ENCODE measurements at regions of chr10 and their contacts with region 1.

Region 1: DNA sequence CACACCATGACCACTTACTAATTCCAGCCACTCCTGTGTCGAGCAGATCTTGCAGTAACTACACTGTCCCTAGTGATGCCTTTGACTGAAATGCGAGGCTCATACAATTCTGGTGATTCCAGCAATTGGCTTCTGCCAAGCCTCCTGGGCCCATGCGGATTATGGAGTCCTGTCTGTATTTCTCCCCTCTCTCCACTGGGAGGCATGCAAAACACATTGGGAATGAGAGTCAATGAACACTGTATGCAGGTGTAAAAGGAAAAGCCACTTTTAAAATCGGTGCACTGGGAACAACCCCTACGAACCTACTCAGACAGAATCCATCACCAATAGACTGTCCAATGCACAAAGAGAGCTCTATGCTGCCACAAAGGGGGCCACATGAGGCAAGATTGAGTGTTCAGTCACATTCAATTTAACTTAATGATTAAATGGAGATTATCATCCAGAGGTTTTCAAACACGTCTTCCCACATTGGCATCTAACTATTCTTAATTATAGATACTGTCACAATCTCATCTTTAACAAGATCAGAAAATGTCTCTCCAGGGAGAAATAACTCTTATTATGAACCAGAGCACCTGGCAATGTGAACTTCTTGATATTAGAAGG is 550.6 kb downstream of the GLRX3 start:
- DNase-seq: peak in 1 of 2 experiments; percentile 13
- H3K4me3 ChIP-seq: no peak overlapping the region
- H3K27ac ChIP-seq: no peak overlapping the region
- H3K4me1 ChIP-seq: no peaks in the 10 kb centered on the region
- H3K27me3 ChIP-seq: no peaks in the 10 kb centered on the region
- CTCF ChIP-seq: peak; percentile 49 to 90 (median 75)
- EP300 ChIP-seq: no peak
- POLR2A ChIP-seq: no peak
- RAD21 ChIP-seq: peak; percentile 95 to 96

Region 2: GRCh38 chr10:130696870-130697269 is 10.1 kb after region 1 on chr10:
- CTCF ChIA-PET with region 1: interaction called, 10 read pairs
- POLR2A ChIA-PET with region 1: no interaction called
- DNase-seq: no peak
- H3K4me3 ChIP-seq: no peak overlapping the region
- H3K27ac ChIP-seq: no peak overlapping the region
- H3K4me1 ChIP-seq: no peaks in the 10 kb centered on the region
- H3K27me3 ChIP-seq: no peaks in the 10 kb centered on the region
- CTCF ChIP-seq: no peak
- EP300 ChIP-seq: no peak
- POLR2A ChIP-seq: no peak
- RAD21 ChIP-seq: no peak

Region 3: DNA sequence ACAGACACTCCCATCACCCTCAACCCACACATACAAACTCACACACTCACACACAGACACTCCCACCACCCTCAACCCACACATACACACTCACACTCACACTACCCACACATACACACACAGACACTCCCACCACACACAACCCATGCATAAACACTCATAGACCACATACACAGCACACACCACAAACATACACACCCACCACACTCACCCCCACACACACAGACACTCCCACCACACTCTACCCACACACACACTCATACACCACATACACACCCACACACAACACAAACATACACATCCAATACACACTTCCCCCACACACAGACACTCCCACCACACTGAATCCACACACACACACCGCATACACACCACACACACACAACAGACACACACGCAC is 103.5 kb after region 1 on chr10:
- CTCF ChIA-PET with region 1: no interaction called
- POLR2A ChIA-PET with region 1: no interaction called
- DNase-seq: no peak
- H3K4me3 ChIP-seq: no peak overlapping the region
- H3K27ac ChIP-seq: no peak overlapping the region
- H3K4me1 ChIP-seq: no peaks in the 10 kb centered on the region
- H3K27me3 ChIP-seq: no peaks in the 10 kb centered on the region
- CTCF ChIP-seq: peak in 1 of 3 experiments; percentile 1; a peak in 1 of 4 replicates
- EP300 ChIP-seq: no peak
- POLR2A ChIP-seq: no peak
- RAD21 ChIP-seq: no peak